BJ (cell line): ENCODE measurements at regions of chr17 and their contacts with region 1.

Region 1: GRCh38 chr17:61412143-61412859 is 12.7 kb downstream of the TBX2 start:
- DNase-seq: no peak
- H3K4me3 ChIP-seq: peak overlapping the region; percentile 66
- H3K27me3 ChIP-seq: no peaks in the 10 kb centered on the region
- CTCF ChIP-seq: peak; percentile 91

Region 2: GRCh38 chr17:60971515-60972369 is 440.6 kb before region 1 on chr17:
- CTCF ChIA-PET with region 1: interaction called, 35 read pairs
- POLR2A ChIA-PET with region 1: no interaction called
- DNase-seq: no peak
- H3K4me3 ChIP-seq: no peak overlapping the region
- H3K27me3 ChIP-seq: no peaks in the 10 kb centered on the region
- CTCF ChIP-seq: peak; percentile 71

Region 3: DNA sequence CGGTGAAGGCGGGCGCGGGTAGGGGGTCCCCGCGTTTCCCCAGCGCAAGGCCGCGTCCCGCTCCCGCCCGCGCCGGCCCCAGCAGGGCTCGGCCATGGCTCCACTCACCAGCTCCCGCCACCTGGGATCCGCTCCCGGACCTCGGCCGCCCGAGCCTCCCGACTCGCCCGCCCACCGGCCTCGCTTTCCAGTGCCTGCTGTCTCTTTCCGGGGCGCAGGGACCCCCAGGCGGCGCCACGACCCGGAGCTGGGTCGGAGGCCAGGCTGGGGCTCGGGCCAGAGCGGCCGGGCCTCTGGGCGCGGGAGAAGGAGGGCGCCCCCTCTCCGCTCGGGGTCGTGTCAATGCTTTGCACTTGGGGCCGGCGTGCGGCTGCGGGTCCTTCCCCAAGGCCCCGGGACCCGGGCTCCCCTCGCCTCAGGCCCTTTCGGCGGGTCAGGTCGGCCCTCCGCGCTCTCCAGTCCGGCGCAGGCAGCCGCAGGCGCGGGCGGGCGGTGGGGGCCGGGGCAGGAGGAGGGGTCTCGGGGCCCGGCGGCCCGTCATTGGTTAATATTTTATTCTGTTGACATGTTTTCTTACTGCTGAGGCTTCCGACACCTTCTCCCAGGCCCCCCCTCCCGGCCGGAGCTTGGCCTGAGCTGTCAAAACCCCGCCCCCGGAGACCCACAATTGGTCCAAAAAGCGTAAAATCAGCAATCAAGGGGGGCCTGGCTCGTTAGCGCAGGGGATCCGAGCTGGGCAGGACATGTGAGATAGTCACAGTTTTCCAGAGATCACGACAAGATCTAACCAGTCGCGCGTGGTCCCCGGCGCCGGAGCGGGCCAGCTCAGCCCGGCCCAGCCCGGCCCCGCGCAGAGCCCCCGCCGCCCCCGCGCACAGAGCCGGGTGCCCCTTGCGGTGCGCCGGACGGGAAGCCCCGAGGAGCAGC is 12.9 kb before region 1 on chr17 and contains the start of gene TBX2:
- CTCF ChIA-PET with region 1: interaction called, 18 read pairs
- POLR2A ChIA-PET with region 1: no interaction called
- DNase-seq: no peak
- H3K4me3 ChIP-seq: peak within 1 kb of the TSS; percentile 78
- H3K27me3 ChIP-seq: no peaks in the 10 kb centered on the region
- CTCF ChIP-seq: peak; percentile 1; the same call in 1 of the 2 replicates
- polyA plus RNA-seq, gene TBX2: 4.3 and 7.8 TPM in 2 replicates

Region 4: GRCh38 chr17:61551255-61551742 is 139.0 kb after region 1 on chr17:
- CTCF ChIA-PET with region 1: interaction called, 36 read pairs
- POLR2A ChIA-PET with region 1: no interaction called
- DNase-seq: peak; percentile 5
- H3K4me3 ChIP-seq: no peak overlapping the region
- H3K27me3 ChIP-seq: no peaks in the 10 kb centered on the region; the same call in 1 of the 2 replicates
- CTCF ChIP-seq: peak; percentile 69

Region 5: GRCh38 chr17:61565054-61565612 is 152.8 kb after region 1 on chr17:
- CTCF ChIA-PET with region 1: interaction called, 206 read pairs
- POLR2A ChIA-PET with region 1: no interaction called
- DNase-seq: no peak
- H3K4me3 ChIP-seq: no peak overlapping the region
- H3K27me3 ChIP-seq: no peaks in the 10 kb centered on the region; the same call in 1 of the 2 replicates
- CTCF ChIP-seq: no peak

Region 6: DNA sequence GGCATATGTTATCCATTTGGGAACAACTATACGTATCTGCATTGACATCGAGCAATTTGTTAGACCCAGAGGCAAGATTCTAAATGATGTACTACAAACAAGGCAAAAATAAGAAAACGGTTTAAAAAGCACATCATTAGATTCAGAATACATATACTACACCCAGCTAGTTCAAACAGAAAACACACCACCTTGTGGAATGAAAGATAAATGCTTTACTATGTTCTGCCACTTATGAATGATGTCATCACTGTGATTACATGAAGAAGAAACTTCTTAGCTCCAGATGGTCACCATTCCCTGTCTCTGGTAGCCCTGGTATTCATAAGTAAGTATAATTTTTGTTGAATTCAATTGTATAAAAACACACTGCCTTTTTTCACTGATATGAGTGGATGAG is 170.9 kb after region 1 on chr17:
- CTCF ChIA-PET with region 1: interaction called, 206 read pairs
- POLR2A ChIA-PET with region 1: no interaction called
- DNase-seq: peak; percentile 37
- H3K4me3 ChIP-seq: no peak overlapping the region
- H3K27me3 ChIP-seq: no peaks in the 10 kb centered on the region
- CTCF ChIP-seq: peak; percentile 39